ENCODE measurements at regions of chr19 and their contacts with region 1.

Region 1: DNA sequence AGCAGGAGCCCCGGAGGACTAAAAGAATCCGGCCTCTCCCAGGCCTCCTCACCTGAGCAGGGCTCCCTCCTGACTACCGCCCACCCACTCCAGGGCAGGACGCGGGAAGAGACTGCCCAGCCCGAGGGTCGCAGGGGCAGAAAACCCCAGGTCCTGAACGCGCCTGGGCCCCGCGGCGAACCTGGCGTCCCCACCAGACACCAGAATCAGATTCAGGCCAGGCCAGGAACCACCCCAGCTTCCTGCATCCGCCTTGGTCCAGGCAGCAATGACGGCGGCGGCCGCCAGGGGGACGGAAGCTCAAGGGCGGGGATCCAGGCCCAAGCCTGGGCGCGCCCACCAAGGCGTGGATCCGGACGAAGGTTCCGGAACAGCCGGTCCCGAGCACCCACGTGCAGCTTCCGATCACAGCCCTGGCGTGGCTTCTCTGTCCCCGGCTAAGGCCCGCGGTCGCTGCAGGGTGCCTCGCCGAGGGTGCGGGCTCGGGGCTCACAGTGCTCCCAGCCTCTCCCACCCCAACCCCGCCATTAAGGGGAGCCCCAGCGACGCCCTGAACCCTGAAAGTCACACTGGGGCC is 3.6 kb downstream of the LGALS7 start:
- DNase-seq: peak; percentile 95
- ATAC-seq: peak; percentile 91
- H3K4me3 ChIP-seq: peak overlapping the region in 4 of 5 experiments; percentile 40 to 59 (median 47)
- H3K4me3 Mint-ChIP-seq: peak overlapping the region; percentile 81
- H3K27ac ChIP-seq: peak overlapping the region; percentile 75 to 77
- H3K27ac Mint-ChIP-seq: peak overlapping the region; percentile 89
- H3K4me1 ChIP-seq: peaks cover 6 to 12% of the 10 kb centered on the region in 2 donors
- H3K4me1 Mint-ChIP-seq: peaks cover 11% of the 10 kb centered on the region
- H3K27me3 ChIP-seq: no peaks in the 10 kb centered on the region
- H3K27me3 Mint-ChIP-seq: no peaks in the 10 kb centered on the region
- CTCF ChIP-seq: peak; percentile 86

Region 2: GRCh38 chr19:38736036-38736412 is 33.7 kb before region 1 on chr19:
- CTCF ChIA-PET with region 1: interaction called, 10 read pairs
- POLR2A ChIA-PET with region 1: interaction called, 10 read pairs
- intact Hi-C with region 1: loop called (anchors 5 kb)
- DNase-seq: peak; percentile 87
- ATAC-seq: peak; percentile 53
- H3K4me3 ChIP-seq: peak overlapping the region in 4 of 5 experiments; percentile 32 to 69 (median 58)
- H3K4me3 Mint-ChIP-seq: peak overlapping the region; percentile 79
- H3K27ac ChIP-seq: no peak overlapping the region
- H3K27ac Mint-ChIP-seq: peak overlapping the region; percentile 76
- H3K4me1 ChIP-seq: peaks cover 29 to 47% of the 10 kb centered on the region in 2 donors
- H3K4me1 Mint-ChIP-seq: peaks cover 42% of the 10 kb centered on the region
- H3K27me3 ChIP-seq: no peaks in the 10 kb centered on the region
- H3K27me3 Mint-ChIP-seq: no peaks in the 10 kb centered on the region
- CTCF ChIP-seq: no peak

Region 3: GRCh38 chr19:38812841-38813320 is 43.2 kb after region 1 on chr19 and contains the start of gene LGALS4:
- CTCF ChIA-PET with region 1: no interaction called
- POLR2A ChIA-PET with region 1: no interaction called
- intact Hi-C with region 1: no loop called
- DNase-seq: no peak
- ATAC-seq: no peak
- H3K4me3 ChIP-seq: no peak within 1 kb of the TSS
- H3K4me3 Mint-ChIP-seq: no peak within 1 kb of the TSS
- H3K27ac ChIP-seq: no peak within 1 kb of the TSS
- H3K27ac Mint-ChIP-seq: peak within 1 kb of the TSS; percentile 32
- H3K4me1 ChIP-seq: no peaks in the 10 kb centered on the region
- H3K4me1 Mint-ChIP-seq: no peaks in the 10 kb centered on the region
- H3K27me3 ChIP-seq: no peaks in the 10 kb centered on the region
- H3K27me3 Mint-ChIP-seq: no peaks in the 10 kb centered on the region
- CTCF ChIP-seq: no peak
- total RNA-seq, gene LGALS4: 6.9 and 8.4 TPM in 2 replicates